ENCODE measurements at regions of chr22 and their contacts with region 1.

Region 1: GRCh38 chr22:22207845-22208564 is 36.6 kb upstream of the VPREB1 start:
- DNase-seq: peak; percentile 98
- H3K4me3 ChIP-seq: peak overlapping the region; percentile 50
- H3K27ac ChIP-seq: peak overlapping the region; percentile 81
- H3K4me1 ChIP-seq: peaks cover 65% of the 10 kb centered on the region
- CTCF ChIP-seq: peak; percentile 97

Region 2: DNA sequence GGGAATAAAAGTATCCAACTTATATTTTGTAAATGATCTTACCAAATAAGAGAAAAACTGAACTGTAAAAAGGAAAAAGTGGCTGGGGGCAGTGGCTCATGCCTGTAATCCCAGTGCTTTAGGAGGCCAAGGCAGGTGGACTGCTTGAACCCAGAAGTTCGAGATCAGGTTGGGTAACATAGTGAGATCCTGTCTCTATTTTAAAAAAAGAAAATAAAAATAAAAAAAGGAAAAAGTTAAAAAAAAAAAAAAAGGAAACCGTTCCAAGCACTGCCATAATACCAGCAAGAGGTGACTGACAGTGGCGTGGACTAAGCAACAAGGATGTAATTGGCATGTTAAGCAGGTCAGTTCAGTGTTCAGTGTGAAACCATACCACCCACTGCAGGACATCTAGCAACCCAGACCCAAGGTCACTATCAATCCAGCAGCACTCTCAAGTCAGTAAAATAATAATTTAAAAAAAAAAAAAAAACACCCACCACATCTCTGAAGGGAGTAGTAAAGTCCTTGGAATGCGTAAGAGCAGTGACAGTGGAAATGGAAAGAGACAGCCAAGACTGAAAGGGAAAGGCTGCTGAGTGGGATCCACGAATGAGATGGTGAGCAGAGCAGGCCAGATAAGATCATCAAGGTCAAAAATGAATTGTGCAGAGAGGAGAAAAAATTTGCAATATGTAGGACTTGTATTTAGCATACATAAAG is 384.1 kb before region 1 on chr22:
- CTCF ChIA-PET with region 1: no interaction called
- POLR2A ChIA-PET with region 1: no interaction called
- intact Hi-C with region 1: no loop called
- DNase-seq: no peak
- H3K4me3 ChIP-seq: no peak overlapping the region
- H3K27ac ChIP-seq: no peak overlapping the region
- H3K4me1 ChIP-seq: peaks cover 30% of the 10 kb centered on the region
- CTCF ChIP-seq: no peak

Region 3: GRCh38 chr22:22060200-22061084 is 147.6 kb before region 1 on chr22:
- CTCF ChIA-PET with region 1: no interaction called
- POLR2A ChIA-PET with region 1: no interaction called
- intact Hi-C with region 1: loop called (anchors 2 kb)
- DNase-seq: peak; percentile 84
- H3K4me3 ChIP-seq: no peak overlapping the region
- H3K27ac ChIP-seq: peak overlapping the region; percentile 50
- H3K4me1 ChIP-seq: peaks cover 60% of the 10 kb centered on the region
- CTCF ChIP-seq: peak; percentile 99

Region 4: DNA sequence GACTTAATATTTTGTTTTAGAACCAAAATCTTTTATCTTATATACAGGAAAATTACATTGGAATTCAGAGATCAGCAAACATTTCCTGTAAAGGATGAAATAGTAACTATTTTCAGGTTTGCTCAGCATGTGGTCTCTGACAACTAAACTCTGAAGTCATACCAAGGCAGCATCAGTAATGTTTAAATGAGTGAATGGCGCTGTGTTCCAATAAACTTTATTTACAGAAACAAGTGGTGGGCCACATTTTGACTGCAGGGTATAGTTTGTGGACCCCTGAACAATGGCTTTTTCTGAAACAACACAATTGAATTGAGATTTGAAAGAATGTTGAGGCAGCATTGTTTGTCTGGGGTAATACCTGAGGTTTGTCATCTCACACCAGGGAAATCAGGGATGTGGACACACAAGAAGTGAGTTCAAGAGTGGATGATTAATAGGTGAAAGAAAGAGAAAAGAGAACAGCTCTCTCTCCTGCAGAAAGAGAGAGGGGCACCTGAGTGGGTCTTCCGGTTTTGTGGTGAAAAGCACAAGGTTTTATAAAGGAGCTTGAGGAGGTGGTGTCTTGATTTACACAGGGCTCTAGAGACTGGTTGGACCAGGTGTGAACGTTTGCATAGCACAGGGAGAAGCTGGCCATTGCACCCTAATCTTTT is 76.9 kb before region 1 on chr22:
- CTCF ChIA-PET with region 1: no interaction called
- POLR2A ChIA-PET with region 1: no interaction called
- intact Hi-C with region 1: no loop called
- DNase-seq: peak; percentile 37
- H3K4me3 ChIP-seq: no peak overlapping the region
- H3K27ac ChIP-seq: no peak overlapping the region
- H3K4me1 ChIP-seq: peaks cover 13% of the 10 kb centered on the region
- CTCF ChIP-seq: no peak

Region 5: DNA sequence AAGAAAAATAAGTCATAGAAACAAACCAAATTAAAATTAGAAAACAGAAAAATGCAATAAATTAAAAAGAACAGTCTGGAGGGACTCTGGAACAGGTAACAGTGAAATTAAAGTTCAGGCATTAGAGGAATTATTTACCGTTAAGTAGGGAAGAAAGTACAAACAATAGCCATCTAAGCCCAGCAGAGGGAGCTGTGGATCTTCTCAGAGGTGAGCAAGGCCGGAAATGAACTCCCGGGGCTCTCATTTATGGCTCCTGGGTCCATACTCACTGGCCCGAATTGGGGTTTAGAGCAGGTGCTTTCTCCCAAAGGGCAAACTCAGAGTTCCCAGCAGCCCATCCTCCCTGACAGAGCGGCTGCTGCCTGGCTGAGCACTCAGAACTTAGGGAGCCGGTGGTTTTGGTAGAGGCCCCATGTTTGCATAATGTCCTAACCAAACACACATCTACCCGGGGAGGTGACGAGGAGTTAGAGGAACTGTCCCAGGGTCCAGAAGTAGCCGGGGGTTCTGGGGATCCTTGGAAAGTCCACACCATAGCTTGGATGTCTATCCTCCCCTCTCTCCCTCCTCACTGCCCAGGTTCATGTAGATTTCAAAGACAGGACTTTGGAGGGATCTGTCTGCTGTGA is 51.2 kb before region 1 on chr22:
- CTCF ChIA-PET with region 1: interaction called, 4 read pairs
- POLR2A ChIA-PET with region 1: interaction called, 17 read pairs
- intact Hi-C with region 1: loop called (anchors 1 kb)
- DNase-seq: peak; percentile 94
- H3K4me3 ChIP-seq: peak overlapping the region; percentile 46
- H3K27ac ChIP-seq: peak overlapping the region; percentile 84
- H3K4me1 ChIP-seq: peaks cover 55% of the 10 kb centered on the region
- CTCF ChIP-seq: peak; percentile 96

Region 6: DNA sequence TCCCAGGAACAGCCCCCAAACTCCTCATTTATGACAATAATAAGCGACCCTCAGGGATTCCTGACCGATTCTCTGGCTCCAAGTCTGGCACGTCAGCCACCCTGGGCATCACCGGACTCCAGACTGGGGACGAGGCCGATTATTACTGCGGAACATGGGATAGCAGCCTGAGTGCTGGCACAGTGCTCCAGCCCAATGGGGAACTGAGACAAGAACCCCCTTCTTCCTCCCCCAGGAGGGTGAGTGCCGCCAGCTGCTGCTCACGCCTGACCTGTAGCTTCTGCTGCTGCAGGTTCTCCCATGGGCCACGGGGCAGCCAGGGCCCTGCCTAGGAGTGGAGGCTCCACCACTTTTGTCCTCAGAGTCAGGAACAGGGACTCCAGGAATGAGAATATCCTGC is 114.8 kb after region 1 on chr22:
- CTCF ChIA-PET with region 1: no interaction called
- POLR2A ChIA-PET with region 1: no interaction called
- intact Hi-C with region 1: loop called (anchors 1 kb)
- DNase-seq: no peak
- H3K4me3 ChIP-seq: no peak overlapping the region
- H3K27ac ChIP-seq: no peak overlapping the region
- H3K4me1 ChIP-seq: peaks cover 11% of the 10 kb centered on the region
- CTCF ChIP-seq: no peak

Region 7: GRCh38 chr22:22357024-22357883 is 149.2 kb after region 1 on chr22:
- CTCF ChIA-PET with region 1: no interaction called
- POLR2A ChIA-PET with region 1: no interaction called
- intact Hi-C with region 1: loop called (anchors 1 kb)
- DNase-seq: peak; percentile 97
- H3K4me3 ChIP-seq: peak overlapping the region; percentile 53
- H3K27ac ChIP-seq: peak overlapping the region; percentile 55
- H3K4me1 ChIP-seq: peaks cover 54% of the 10 kb centered on the region
- CTCF ChIP-seq: peak; percentile 85

Region 8: DNA sequence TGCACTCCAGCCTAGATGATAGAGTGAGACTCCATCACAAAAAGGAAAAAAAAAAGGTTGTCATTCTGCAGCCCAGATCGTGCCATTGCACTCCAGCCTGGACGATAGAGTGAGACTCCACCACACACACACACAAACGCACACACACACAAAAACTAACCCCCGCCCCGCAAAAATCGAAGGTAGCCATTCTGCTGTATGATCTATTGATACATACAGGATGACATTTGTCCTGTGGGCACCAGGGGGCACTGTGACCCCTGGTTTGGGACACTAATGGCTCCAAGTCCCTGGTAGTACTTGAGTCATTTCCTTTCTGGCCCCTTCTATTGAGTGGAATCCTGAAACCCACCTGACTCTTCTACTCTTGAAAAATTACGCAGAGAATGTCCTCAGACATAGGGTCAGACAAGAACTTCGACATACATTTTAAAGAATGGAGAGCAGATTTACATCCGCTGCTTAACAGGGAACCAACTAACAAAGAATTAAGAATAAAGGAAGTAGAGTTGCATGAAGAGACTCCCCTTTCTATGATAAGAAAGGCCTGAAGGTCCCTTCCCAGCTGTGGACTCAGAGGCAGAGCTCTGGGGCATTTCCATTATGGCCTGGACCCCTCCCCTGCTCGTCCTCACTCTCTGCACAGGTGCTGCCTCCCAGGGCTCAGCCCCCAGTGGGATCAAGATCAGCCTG is 386.1 kb after region 1 on chr22:
- CTCF ChIA-PET with region 1: no interaction called
- POLR2A ChIA-PET with region 1: no interaction called
- intact Hi-C with region 1: loop called (anchors 10 kb)
- DNase-seq: peak; percentile 84
- H3K4me3 ChIP-seq: no peak overlapping the region
- H3K27ac ChIP-seq: no peak overlapping the region
- H3K4me1 ChIP-seq: peaks cover 14% of the 10 kb centered on the region
- CTCF ChIP-seq: peak; percentile 96

Measured in OCI-LY7 (cell line).